Transverse colon (tissue), 4 donors: ENCODE measurements at regions of chr13 and their contacts with region 1.

Region 1: DNA sequence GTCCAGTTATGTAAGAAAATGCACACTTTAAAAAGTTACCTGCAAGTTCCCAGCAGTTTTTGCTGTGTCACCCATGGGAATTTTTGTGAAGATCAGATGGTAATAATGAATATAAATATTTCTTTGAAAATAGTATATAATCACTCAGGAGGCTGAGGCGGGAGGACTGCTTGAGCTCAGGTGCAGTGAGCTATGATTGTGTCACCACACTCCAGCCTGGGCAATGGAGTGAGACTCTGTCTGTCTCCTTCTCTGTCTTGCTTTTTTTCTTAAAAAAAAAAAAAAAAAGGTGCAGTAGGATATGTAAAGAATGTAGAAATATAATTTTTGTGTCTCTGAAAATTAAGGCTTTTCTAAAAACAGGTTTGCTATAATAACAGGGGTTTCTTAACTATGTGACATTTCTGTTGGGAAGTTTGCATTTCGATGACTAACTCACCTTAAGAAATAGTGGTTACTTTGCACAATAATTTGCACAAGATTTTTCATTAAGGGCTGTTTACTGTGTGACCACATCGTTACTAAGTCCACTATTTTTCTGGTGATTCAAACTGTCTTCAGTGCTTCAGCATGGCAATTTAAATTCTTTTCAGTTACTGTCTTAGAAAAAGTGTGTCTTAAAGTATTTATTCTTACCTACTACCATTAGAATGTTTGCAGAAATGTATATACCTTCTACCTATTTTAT is 37.3 kb downstream of the DNAJC3 start:
- DNase-seq: no peak
- H3K4me3 ChIP-seq: no peak overlapping the region
- H3K27ac ChIP-seq: no peak overlapping the region
- H3K4me1 ChIP-seq: no peaks in the 10 kb centered on the region
- H3K27me3 ChIP-seq: no peaks in the 10 kb centered on the region
- CTCF ChIP-seq: no peak
- EP300 ChIP-seq: no peak
- POLR2A ChIP-seq: no peak

Region 2: GRCh38 chr13:95676762-95677563 is 37.3 kb before region 1 on chr13 and contains the start of gene DNAJC3:
- in situ Hi-C with region 1: no loop called
- intact Hi-C with region 1: loop called (anchors 1 kb)
- DNase-seq: peak; percentile 99
- H3K4me3 ChIP-seq: peak within 1 kb of the TSS; percentile 70 to 97 (median 85)
- H3K27ac ChIP-seq: peak within 1 kb of the TSS; percentile 94 to 98 (median 95)
- H3K4me1 ChIP-seq: peaks cover 0 to 51% (median 25%) of the 10 kb centered on the region in 4 donors
- H3K27me3 ChIP-seq: no peaks in the 10 kb centered on the region
- CTCF ChIP-seq: no peak
- EP300 ChIP-seq: no peak
- POLR2A ChIP-seq: peak; percentile 98
- total RNA-seq, gene DNAJC3: 22.8 to 49.7 (median 35.5) TPM